Mammary epithelial cell (primary cell): ENCODE measurements at regions of chr15 and their contacts with region 1.

Region 1: GRCh38 chr15:35444557-35445204 is 101.3 kb downstream of the DPH6 start:
- DNase-seq: peak; percentile 28
- H3K4me3 ChIP-seq: no peak overlapping the region
- H3K27ac ChIP-seq: no peak overlapping the region
- H3K4me1 ChIP-seq: peaks cover 6% of the 10 kb centered on the region
- H3K27me3 ChIP-seq: no peaks in the 10 kb centered on the region
- CTCF ChIP-seq: peak; percentile 76 to 84

Region 2: GRCh38 chr15:35078221-35078915 is 366.3 kb before region 1 on chr15:
- CTCF ChIA-PET with region 1: interaction called, 4 read pairs
- dilution Hi-C with region 1: no loop called
- in situ Hi-C with region 1: loop called in 1 of 2 experiments (anchors 25 kb)
- intact Hi-C with region 1: loop called (anchors 1 kb)
- DNase-seq: peak; percentile 16
- H3K4me3 ChIP-seq: no peak overlapping the region
- H3K27ac ChIP-seq: no peak overlapping the region
- H3K4me1 ChIP-seq: no peaks in the 10 kb centered on the region
- H3K27me3 ChIP-seq: no peaks in the 10 kb centered on the region
- CTCF ChIP-seq: peak; percentile 79 to 83

Region 3: DNA sequence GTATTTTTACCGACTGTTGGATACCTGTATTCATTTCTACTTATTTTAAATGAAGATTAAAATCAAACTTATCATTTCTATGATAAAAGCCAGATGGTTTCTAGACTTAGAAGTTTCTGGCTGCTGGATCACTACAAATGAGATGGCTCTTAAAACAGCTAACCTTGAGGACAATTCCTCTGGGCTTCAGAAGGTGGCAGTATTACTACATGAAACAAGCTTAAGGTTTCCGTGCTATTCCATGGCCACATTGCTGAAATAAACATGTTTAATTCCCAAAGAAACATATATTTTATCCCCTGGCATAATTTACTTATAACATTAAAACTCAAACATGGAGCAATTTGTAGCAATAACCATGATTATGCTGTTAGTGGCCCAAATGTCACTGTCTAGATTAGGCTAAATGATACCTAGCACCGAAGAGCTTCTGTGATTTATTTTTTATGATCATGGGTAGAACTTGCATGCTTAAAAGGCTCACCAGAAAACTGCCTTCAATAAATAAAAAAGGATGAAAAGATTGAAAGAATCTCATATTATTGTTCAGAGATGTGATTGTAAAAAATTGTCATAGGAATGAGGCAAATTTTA is 155.6 kb before region 1 on chr15:
- CTCF ChIA-PET with region 1: interaction called, 23 read pairs
- dilution Hi-C with region 1: no loop called
- in situ Hi-C with region 1: loop called (anchors 5 to 10 kb)
- intact Hi-C with region 1: loop called (anchors 1 kb)
- DNase-seq: peak; percentile 34
- H3K4me3 ChIP-seq: no peak overlapping the region
- H3K27ac ChIP-seq: no peak overlapping the region
- H3K4me1 ChIP-seq: peaks cover 12% of the 10 kb centered on the region
- H3K27me3 ChIP-seq: no peaks in the 10 kb centered on the region
- CTCF ChIP-seq: peak; percentile 84 to 88

Region 4: GRCh38 chr15:35306361-35306981 is 138.2 kb before region 1 on chr15:
- CTCF ChIA-PET with region 1: no interaction called
- dilution Hi-C with region 1: no loop called
- in situ Hi-C with region 1: no loop called
- intact Hi-C with region 1: loop called (anchors 5 kb)
- DNase-seq: peak; percentile 68
- H3K4me3 ChIP-seq: no peak overlapping the region
- H3K27ac ChIP-seq: peak overlapping the region; percentile 29
- H3K4me1 ChIP-seq: peaks cover 23% of the 10 kb centered on the region
- H3K27me3 ChIP-seq: no peaks in the 10 kb centered on the region
- CTCF ChIP-seq: no peak

Region 5: DNA sequence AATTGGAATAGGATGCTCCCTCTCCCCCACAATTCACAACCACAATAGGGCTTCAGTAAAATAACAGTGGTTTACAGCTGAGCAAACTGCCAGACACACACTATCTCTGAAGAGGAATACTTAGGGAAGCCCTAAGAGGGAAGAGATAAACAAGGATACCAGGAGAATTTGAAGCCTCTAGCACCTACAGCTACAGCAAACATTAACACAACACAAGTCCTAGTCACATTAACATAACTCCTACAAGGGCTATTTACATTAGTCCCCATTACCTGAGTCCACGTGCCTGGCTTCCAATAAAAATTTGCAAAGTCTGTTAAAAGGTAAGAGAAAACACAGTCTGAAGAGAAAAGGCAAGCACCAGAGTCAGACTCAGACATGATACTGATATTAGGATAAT is 787.8 kb after region 1 on chr15:
- CTCF ChIA-PET with region 1: interaction called, 10 read pairs
- dilution Hi-C with region 1: no loop called
- in situ Hi-C with region 1: no loop called
- intact Hi-C with region 1: no loop called
- DNase-seq: no peak
- H3K4me3 ChIP-seq: no peak overlapping the region
- H3K27ac ChIP-seq: no peak overlapping the region
- H3K4me1 ChIP-seq: no peaks in the 10 kb centered on the region
- H3K27me3 ChIP-seq: no peaks in the 10 kb centered on the region
- CTCF ChIP-seq: no peak